IMR-90 (cell line): ENCODE measurements at regions of chr1 and their contacts with region 1.

Region 1: DNA sequence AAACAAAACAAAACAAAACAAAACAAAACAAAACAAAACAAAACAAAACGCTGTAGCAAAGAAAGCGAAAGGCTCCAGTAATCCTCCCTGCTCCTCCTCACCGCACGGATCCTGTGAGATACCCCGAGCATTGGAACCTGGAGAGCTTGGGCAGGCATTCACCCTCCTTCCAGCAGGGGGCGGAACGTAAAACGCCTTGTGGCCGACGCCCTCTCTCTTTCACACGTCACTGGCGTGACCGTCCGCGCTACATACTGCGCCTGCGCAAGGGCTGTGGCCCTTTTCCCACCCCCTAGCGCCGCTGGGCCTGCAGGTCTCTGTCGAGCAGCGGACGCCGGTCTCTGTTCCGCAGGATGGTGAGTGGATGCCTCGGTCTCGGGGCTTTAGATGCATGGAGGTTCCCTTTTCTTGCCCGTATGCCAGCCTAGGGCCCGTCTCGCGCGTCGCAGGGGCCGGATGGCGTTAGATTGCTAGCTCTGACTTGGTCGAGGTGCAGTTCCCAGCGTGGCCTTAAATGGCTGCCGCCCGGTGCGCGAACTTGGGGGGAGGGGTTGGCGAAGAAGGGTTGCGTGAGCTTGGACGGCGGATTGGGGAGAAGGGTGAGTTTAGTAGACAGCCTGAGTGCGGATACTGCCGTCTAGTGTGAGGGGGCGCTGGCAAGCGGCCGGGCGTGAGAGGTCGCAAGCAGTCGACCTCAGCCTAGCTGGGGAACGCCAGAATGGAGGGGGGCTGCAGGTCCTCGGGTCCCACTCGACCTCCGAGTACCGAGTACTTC is at the start of gene RPL5:
- DNase-seq: peak; percentile 97
- ATAC-seq: peak; percentile 95
- H3K4me3 ChIP-seq: peak within 1 kb of the TSS; percentile 72
- H3K27ac ChIP-seq: peak within 1 kb of the TSS; percentile 87
- H3K4me1 ChIP-seq: peaks cover 4% of the 10 kb centered on the region
- H3K27me3 ChIP-seq: no peaks in the 10 kb centered on the region
- CTCF ChIP-seq: peak; percentile 96
- POLR2A ChIP-seq: peak; percentile 97
- RAD21 ChIP-seq: peak; percentile 47
- total RNA-seq, gene RPL5: 1,679 and 1,907 TPM in 2 replicates

Region 2: GRCh38 chr1:91500756-91501522 is 1331.0 kb before region 1 on chr1 and contains the start of gene CDC7:
- CTCF ChIA-PET with region 1: no interaction called
- POLR2A ChIA-PET with region 1: no interaction called
- dilution Hi-C with region 1: no loop called
- in situ Hi-C with region 1: no loop called
- intact Hi-C with region 1: loop called (anchors 5 kb)
- DNase-seq: peak; percentile 87
- ATAC-seq: peak; percentile 92
- H3K4me3 ChIP-seq: peak within 1 kb of the TSS; percentile 59
- H3K27ac ChIP-seq: peak within 1 kb of the TSS; percentile 66
- H3K4me1 ChIP-seq: no peaks in the 10 kb centered on the region; the same call in 1 of the 2 replicates
- H3K27me3 ChIP-seq: no peaks in the 10 kb centered on the region
- CTCF ChIP-seq: peak; percentile 40
- POLR2A ChIP-seq: 0 out of 2 replicates have a peak, but pooled peaks have one; percentile 42
- RAD21 ChIP-seq: peak; percentile 25
- total RNA-seq, gene CDC7: 4.7 and 6.9 TPM in 2 replicates

Region 3: DNA sequence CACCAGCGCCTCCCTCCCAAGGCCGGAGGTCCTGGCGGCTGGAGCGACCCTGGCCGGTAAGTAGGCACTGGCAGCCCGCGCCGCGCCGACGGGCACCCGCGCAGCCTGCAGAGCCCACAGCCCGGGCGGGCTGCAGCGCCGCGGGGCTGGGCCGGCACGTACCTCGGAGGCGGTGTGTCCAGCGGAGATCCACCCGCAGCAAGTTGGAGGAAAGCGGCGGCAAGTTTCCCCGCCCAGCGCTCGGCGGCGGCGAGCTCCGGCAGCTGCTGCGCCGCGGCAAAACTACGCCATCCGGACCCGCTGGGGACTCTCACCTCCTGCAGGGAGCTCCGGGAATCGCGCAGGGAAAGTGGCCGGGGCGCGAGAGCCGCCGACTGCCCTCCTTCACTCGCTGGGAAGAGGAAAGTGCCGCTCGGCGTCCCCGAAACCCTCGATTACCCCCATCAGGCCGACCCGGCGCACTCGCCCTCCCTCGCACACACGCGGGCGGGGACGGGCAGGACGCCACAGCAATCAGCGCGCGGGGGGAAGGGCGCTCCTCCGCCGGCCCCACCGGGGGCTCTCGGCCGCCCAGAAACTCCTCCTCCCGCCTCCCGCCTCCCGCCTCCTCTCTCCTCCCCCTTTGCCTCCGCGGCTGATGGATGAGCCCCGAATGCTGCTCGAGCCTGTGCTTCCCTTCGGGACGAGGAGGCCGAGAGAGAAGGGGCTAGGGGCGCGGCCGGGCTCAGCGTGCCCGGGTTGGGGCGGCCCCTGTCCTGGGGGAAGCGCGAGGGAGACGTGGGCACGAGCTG is 946.0 kb before region 1 on chr1 and contains the start of gene TGFBR3:
- CTCF ChIA-PET with region 1: no interaction called
- POLR2A ChIA-PET with region 1: no interaction called
- dilution Hi-C with region 1: no loop called
- in situ Hi-C with region 1: no loop called
- intact Hi-C with region 1: no loop called
- DNase-seq: peak; percentile 90
- ATAC-seq: peak; percentile 93
- H3K4me3 ChIP-seq: peak within 1 kb of the TSS; percentile 90
- H3K27ac ChIP-seq: peak within 1 kb of the TSS; percentile 78
- H3K4me1 ChIP-seq: peaks cover 7% of the 10 kb centered on the region
- H3K27me3 ChIP-seq: no peaks in the 10 kb centered on the region
- CTCF ChIP-seq: peak; percentile 59
- POLR2A ChIP-seq: peak; percentile 73
- RAD21 ChIP-seq: peak; percentile 62
- total RNA-seq, gene TGFBR3: 8.3 and 11.3 TPM in 2 replicates

Region 4: DNA sequence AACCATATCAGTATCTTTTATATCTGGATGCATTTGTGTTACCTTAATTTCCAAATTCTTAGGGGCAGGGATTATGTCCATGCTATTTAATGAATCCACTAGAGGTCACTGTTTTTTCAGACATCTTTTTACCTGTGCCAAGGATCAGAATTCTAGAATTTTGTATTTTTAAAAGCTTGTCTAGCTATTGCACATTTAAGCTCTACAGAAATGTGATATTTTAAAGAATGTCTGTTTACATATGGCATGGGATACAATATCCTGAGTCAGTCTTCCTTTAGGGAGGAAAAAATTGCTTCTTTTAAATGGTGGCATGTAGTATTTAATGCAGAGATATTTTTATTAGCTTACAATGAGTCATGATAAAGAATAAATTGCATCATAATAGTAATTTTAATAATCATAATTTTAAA is 521.8 kb before region 1 on chr1:
- CTCF ChIA-PET with region 1: no interaction called
- POLR2A ChIA-PET with region 1: no interaction called
- dilution Hi-C with region 1: no loop called
- in situ Hi-C with region 1: no loop called
- intact Hi-C with region 1: loop called (anchors 10 kb)
- DNase-seq: peak; percentile 50
- ATAC-seq: peak; percentile 66
- H3K4me3 ChIP-seq: no peak overlapping the region
- H3K27ac ChIP-seq: no peak overlapping the region
- H3K4me1 ChIP-seq: no peaks in the 10 kb centered on the region
- H3K27me3 ChIP-seq: no peaks in the 10 kb centered on the region
- CTCF ChIP-seq: peak; percentile 65
- POLR2A ChIP-seq: no peak
- RAD21 ChIP-seq: peak; percentile 64

Region 5: DNA sequence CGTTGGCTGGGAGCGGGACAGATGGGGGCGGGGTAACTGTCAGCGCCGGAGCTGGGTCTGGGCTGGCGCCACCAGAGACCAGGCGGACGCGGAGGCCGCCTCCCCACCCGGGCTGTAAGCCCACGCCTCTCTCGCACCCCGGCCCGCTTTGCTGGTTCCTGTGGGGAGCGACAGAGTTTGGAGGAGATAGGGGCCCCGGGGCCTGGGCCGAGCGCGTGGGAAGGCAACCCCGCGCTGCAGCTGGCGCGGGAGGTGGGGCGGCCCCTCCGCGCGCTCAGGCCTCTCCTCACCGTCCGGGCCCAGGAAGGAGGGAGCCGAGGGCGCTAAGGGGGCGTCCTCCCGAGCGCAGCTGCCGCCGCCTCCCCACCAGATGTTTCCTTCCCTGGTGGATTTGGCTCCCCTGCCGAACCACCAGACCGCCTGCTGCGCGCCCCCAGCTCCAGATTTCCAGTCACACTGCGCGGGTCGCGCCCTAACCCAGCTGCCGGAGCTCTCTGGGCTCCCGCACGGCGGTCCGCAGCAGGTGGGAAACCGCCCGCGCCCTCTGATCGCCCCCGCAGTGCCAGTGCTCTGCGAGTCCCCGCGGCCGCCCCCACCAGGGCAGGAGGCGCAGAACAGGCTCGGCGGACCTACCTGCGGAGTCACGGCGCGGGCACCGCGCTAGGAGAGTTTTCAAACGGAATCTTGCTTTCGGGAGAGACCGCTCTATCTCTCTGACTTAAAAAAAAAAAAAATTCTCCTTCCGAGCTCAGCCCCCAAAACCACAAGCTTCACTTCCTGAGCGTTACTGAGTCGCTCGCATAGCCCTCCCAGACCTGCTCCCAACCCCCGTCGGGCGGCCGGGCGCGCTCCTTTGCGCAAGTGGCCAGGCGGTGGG is 346.3 kb before region 1 on chr1:
- CTCF ChIA-PET with region 1: no interaction called
- POLR2A ChIA-PET with region 1: no interaction called
- dilution Hi-C with region 1: no loop called
- in situ Hi-C with region 1: no loop called
- intact Hi-C with region 1: loop called (anchors 10 kb)
- DNase-seq: no peak
- ATAC-seq: peak; percentile 4; the same call in 1 of the 2 replicates
- H3K4me3 ChIP-seq: peak overlapping the region; percentile 35
- H3K27ac ChIP-seq: no peak overlapping the region
- H3K4me1 ChIP-seq: peaks cover 8% of the 10 kb centered on the region
- H3K27me3 ChIP-seq: peaks cover 81% of the 10 kb centered on the region
- CTCF ChIP-seq: no peak
- POLR2A ChIP-seq: no peak
- RAD21 ChIP-seq: no peak

Region 6: GRCh38 chr1:92749024-92749634 is 82.8 kb before region 1 on chr1:
- CTCF ChIA-PET with region 1: interaction called, 8 read pairs
- POLR2A ChIA-PET with region 1: no interaction called
- dilution Hi-C with region 1: no loop called
- in situ Hi-C with region 1: no loop called
- intact Hi-C with region 1: loop called (anchors 5 kb)
- DNase-seq: peak; percentile 75
- ATAC-seq: peak; percentile 31; the same call in 1 of the 2 replicates
- H3K4me3 ChIP-seq: no peak overlapping the region
- H3K27ac ChIP-seq: no peak overlapping the region
- H3K4me1 ChIP-seq: peaks cover 6% of the 10 kb centered on the region
- H3K27me3 ChIP-seq: no peaks in the 10 kb centered on the region
- CTCF ChIP-seq: peak; percentile 76
- POLR2A ChIP-seq: no peak
- RAD21 ChIP-seq: peak; percentile 72

Region 7: DNA sequence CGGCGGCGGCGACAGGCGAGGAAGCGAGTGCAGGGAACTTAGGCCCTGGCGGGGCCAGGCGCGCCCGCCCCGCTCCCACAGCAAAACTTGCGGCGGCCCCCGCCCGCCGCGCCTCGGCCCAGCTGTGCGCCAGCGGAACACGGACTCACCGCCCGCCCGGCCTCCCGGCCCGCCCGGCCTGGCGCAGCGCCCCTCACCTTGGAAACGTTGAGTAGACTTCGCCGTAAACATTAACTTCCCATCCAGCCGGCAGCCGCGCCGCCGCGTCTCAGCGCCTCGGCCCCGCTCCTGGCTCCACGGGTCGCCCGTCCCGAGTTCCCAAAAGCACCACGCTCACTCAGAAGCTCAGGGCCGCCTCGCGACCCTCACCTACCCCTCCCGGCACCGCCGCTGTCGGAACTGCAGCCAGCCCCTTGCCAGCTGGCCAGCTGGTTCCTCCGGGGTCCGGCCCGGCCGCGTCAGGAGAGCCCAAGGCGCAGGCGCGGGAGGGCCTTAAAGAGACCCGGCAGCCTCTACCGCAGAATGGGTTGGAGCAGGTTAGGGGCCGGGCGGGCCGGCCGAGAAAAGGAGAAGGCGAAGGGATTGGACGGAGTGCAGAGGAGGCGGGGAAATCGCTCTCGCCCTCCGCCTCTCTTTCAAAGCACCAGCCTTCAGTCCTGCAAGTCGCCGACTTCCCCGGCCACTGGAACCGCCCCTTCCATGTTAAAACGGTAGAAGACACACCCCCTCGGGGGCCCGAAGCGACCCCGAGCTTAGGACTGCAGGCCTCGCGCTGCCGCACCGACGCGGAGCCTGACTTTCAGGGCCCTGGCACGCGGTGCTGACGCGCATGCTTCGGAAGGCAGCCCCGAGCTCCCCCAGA is 47.1 kb before region 1 on chr1 and contains the start of gene EVI5:
- CTCF ChIA-PET with region 1: interaction called, 4 read pairs
- POLR2A ChIA-PET with region 1: no interaction called
- dilution Hi-C with region 1: no loop called
- in situ Hi-C with region 1: no loop called
- intact Hi-C with region 1: loop called (anchors 2 kb)
- DNase-seq: peak; percentile 97
- ATAC-seq: peak; percentile 97
- H3K4me3 ChIP-seq: peak within 1 kb of the TSS; percentile 91
- H3K27ac ChIP-seq: peak within 1 kb of the TSS; percentile 88
- H3K4me1 ChIP-seq: no peaks in the 10 kb centered on the region; the same call in 1 of the 2 replicates
- H3K27me3 ChIP-seq: no peaks in the 10 kb centered on the region
- CTCF ChIP-seq: no peak; the same call in 1 of the 2 replicates
- POLR2A ChIP-seq: peak; percentile 93
- RAD21 ChIP-seq: peak; percentile 11; the same call in 1 of the 2 replicates
- total RNA-seq, gene EVI5: 26.9 and 54.4 TPM in 2 replicates